Panc1 (cell line): ENCODE measurements at regions of chr20 and their contacts with region 1.

Region 1: GRCh38 chr20:49964964-49965780 is 17.6 kb upstream of the SNAI1 start:
- DNase-seq: no peak
- ATAC-seq: peak; percentile 86
- H3K4me3 ChIP-seq: no peak overlapping the region
- H3K27ac ChIP-seq: no peak overlapping the region
- H3K4me1 ChIP-seq: no peaks in the 10 kb centered on the region
- H3K27me3 ChIP-seq: no peaks in the 10 kb centered on the region
- CTCF ChIP-seq: peak; percentile 85

Region 2: DNA sequence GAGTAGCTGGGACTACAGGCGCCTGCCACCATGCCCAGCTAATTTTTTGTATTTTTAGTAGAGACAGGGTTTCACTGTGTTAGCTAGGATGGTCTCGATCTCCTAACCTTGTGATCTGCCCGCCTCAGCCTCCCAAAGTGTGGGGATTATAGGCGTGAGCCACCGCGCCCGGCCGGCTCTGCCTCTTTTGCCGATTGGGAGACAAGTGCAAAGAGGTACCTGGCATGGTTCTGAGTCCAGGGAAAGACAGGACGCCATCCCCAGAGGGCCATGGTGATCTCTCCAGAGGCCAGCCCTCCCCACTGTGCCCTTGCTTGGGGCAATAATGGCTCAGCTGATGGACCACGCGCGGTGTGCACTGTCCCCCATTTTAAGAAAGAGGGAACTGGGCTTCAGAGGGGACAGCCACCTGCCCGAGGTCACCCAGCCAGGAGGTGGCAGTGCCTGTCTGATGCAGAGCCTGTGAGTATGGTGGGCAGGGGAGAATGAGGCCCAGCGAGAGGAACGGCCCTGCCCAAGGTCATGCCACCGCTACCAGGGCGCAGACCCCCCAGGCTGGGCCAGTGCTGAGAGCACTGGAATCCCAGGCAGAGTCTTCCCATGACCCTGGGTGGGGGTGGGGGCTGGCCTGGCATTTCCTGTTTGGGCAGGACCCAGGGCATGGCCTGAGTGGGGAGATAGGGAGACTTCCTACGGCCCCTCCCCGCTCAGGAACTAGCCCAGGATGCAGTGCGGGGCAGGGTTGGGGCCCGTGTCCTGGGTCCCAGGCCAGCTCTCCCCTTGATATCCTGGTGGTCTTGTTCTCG is 78.6 kb after region 1 on chr20:
- CTCF ChIA-PET with region 1: no interaction called
- POLR2A ChIA-PET with region 1: interaction called, 11 read pairs
- in situ Hi-C with region 1: no loop called
- intact Hi-C with region 1: no loop called
- DNase-seq: no peak
- ATAC-seq: no peak
- H3K4me3 ChIP-seq: no peak overlapping the region
- H3K27ac ChIP-seq: no peak overlapping the region
- H3K4me1 ChIP-seq: peaks cover 4% of the 10 kb centered on the region
- H3K27me3 ChIP-seq: no peaks in the 10 kb centered on the region
- CTCF ChIP-seq: no peak